Mammary epithelial cell (primary cell): ENCODE measurements at regions of chr5 and their contacts with region 1.

Region 1: GRCh38 chr5:178474562-178475184 is 115.5 kb downstream of the COL23A1 start:
- DNase-seq: no peak
- H3K4me3 ChIP-seq: no peak overlapping the region
- H3K27ac ChIP-seq: no peak overlapping the region
- H3K4me1 ChIP-seq: no peaks in the 10 kb centered on the region
- H3K27me3 ChIP-seq: no peaks in the 10 kb centered on the region
- CTCF ChIP-seq: no peak

Region 2: DNA sequence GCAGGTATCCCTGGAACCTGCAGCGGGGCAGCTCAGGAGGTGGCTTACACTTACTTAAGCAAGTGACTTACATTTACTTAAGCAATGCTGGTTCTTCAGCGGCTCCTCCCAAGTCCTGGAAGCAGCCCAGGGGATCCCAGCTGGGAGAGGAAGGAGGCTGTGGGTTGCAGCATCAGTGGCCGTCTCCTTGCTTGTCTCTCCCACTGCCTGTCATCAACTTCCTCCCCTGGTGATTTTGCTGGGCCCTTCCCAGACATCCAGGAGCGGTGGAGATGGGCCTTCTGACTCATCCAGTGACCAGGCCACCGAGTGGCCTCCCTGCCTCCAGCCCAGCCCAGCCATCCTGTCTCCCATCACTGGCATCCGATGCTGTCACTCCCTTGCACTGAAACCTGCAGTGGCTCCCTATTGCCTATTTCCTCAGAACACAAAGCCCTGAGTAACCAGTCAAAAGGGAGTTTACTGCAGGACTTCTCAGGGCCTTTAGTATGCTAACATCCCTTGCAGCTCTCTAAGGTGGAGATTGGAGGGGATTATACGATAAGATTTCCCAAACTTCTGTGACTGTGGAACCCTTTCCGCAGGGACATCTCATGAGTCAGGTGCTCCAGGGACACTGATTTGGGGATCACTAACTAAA is 86.2 kb before region 1 on chr5:
- CTCF ChIA-PET with region 1: no interaction called
- dilution Hi-C with region 1: loop called (anchors 5 kb)
- in situ Hi-C with region 1: no loop called
- intact Hi-C with region 1: no loop called
- DNase-seq: no peak
- H3K4me3 ChIP-seq: no peak overlapping the region
- H3K27ac ChIP-seq: no peak overlapping the region
- H3K4me1 ChIP-seq: no peaks in the 10 kb centered on the region
- H3K27me3 ChIP-seq: no peaks in the 10 kb centered on the region
- CTCF ChIP-seq: no peak

Region 3: GRCh38 chr5:178486239-178486641 is 11.6 kb after region 1 on chr5:
- CTCF ChIA-PET with region 1: no interaction called
- dilution Hi-C with region 1: no loop called
- in situ Hi-C with region 1: no loop called
- intact Hi-C with region 1: no loop called
- DNase-seq: no peak
- H3K4me3 ChIP-seq: no peak overlapping the region
- H3K27ac ChIP-seq: no peak overlapping the region
- H3K4me1 ChIP-seq: no peaks in the 10 kb centered on the region
- H3K27me3 ChIP-seq: no peaks in the 10 kb centered on the region
- CTCF ChIP-seq: no peak

Region 4: DNA sequence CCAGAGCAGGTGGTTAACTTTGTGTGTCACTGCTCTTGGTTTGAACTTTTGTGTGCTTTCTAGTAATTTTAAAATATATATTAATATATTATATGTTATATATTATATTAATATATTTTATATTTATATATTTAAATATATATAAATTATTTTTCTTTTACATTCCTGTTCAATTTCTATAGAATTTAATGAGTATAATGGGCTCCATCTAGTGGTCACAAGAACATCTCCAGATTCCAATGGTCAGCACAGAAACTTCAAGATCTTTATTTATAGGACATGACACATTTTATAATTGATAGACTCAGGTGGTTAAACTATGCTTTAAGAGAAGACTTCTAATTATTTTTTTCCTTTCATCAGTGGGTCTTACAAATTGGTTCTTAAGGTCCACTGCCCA is 76.4 kb after region 1 on chr5:
- CTCF ChIA-PET with region 1: no interaction called
- dilution Hi-C with region 1: loop called (anchors 5 kb)
- in situ Hi-C with region 1: no loop called
- intact Hi-C with region 1: no loop called
- DNase-seq: no peak
- H3K4me3 ChIP-seq: no peak overlapping the region
- H3K27ac ChIP-seq: no peak overlapping the region
- H3K4me1 ChIP-seq: no peaks in the 10 kb centered on the region
- H3K27me3 ChIP-seq: no peaks in the 10 kb centered on the region
- CTCF ChIP-seq: peak; percentile 10 to 50

Region 5: GRCh38 chr5:178612299-178612698 is 137.6 kb after region 1 on chr5:
- CTCF ChIA-PET with region 1: no interaction called
- dilution Hi-C with region 1: no loop called
- in situ Hi-C with region 1: no loop called
- intact Hi-C with region 1: no loop called
- DNase-seq: no peak
- H3K4me3 ChIP-seq: no peak overlapping the region
- H3K27ac ChIP-seq: no peak overlapping the region
- H3K4me1 ChIP-seq: no peaks in the 10 kb centered on the region
- H3K27me3 ChIP-seq: no peaks in the 10 kb centered on the region
- CTCF ChIP-seq: no peak